CD4-positive, alpha-beta memory T cell (primary cell): ENCODE measurements at regions of chr10 and their contacts with region 1.

Region 1: DNA sequence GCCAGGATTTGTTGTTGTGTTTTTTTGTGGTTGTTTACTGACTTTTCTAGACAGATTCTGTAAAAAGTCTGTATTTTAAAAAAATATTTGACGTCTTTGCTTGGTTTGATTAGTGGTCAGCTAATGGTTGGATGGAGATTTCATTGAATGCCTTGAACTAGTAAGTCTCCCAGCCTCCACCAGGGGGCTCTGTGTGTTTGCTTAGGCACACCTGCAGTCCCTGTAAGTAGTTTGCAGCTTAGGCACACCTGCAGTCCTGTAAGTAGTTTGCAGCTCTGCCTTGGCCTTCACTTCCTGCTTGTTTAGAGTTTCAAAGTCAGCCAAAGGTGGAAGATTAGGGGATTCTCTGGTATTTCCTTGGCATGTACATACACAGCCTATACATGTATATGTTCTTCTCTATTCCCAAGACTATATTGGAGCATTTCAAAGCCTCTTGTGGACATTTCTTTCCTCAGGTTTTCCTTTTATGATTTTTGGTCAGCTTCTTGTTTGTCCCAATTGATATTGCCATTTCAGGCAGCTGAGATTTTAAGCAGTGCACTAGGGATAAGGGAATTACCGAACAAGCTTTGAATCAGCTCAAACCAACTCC is 101.6 kb downstream of the CCSER2 start:
- DNase-seq: peak; percentile 50 to 71 (median 54)
- H3K4me3 ChIP-seq: no peak overlapping the region
- H3K4me3 Mint-ChIP-seq: peak overlapping the region in 1 of 8 donors; percentile 4
- H3K27ac ChIP-seq: no peak overlapping the region
- H3K27ac Mint-ChIP-seq: peak overlapping the region in 2 of 7 donors; percentile 8 to 65
- H3K4me1 ChIP-seq: peaks cover 19% of the 10 kb centered on the region
- H3K4me1 Mint-ChIP-seq: peaks cover 45 to 57% (median 48%) of the 10 kb centered on the region in 4 donors
- H3K27me3 ChIP-seq: no peaks in the 10 kb centered on the region
- H3K27me3 Mint-ChIP-seq: no peaks in the 10 kb centered on the region

Region 2: DNA sequence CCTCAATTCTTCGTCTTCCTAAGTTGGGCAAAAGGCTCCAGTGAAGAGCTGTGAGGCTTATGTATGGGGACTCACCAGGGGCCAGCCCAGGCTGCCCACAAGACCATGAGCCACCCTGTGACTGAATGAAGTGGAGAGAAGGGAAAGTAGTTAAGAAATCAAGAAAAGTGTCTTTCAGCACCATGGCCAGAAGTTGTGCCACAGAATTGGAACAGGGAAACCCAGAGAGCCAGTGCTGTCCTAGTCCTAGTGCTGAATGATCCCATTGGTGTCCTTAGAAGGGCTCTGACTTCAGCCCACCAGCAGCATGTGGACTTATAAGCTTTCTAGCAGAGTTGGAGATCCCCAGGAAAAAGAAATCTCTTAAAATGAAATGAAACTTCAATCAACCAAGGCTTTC is 138.6 kb before region 1 on chr10:
- CTCF ChIA-PET with region 1: no interaction called
- POLR2A ChIA-PET with region 1: no interaction called
- intact Hi-C with region 1: no loop called
- DNase-seq: no peak
- H3K4me3 ChIP-seq: no peak overlapping the region
- H3K4me3 Mint-ChIP-seq: no peak overlapping the region
- H3K27ac ChIP-seq: no peak overlapping the region
- H3K27ac Mint-ChIP-seq: no peak overlapping the region
- H3K4me1 ChIP-seq: no peaks in the 10 kb centered on the region
- H3K4me1 Mint-ChIP-seq: peaks cover 3 to 7% (median 4%) of the 10 kb centered on the region in 4 donors
- H3K27me3 ChIP-seq: no peaks in the 10 kb centered on the region
- H3K27me3 Mint-ChIP-seq: peaks cover 0 to 2% of the 10 kb centered on the region in 2 donors

Region 3: GRCh38 chr10:84415539-84416244 is 14.3 kb before region 1 on chr10:
- CTCF ChIA-PET with region 1: interaction called, 31 read pairs
- POLR2A ChIA-PET with region 1: no interaction called
- intact Hi-C with region 1: no loop called
- DNase-seq: no peak
- H3K4me3 ChIP-seq: no peak overlapping the region
- H3K4me3 Mint-ChIP-seq: peak overlapping the region in 1 of 8 donors; percentile 11
- H3K27ac ChIP-seq: no peak overlapping the region
- H3K27ac Mint-ChIP-seq: peak overlapping the region in 2 of 7 donors; percentile 19 to 70
- H3K4me1 ChIP-seq: peaks cover 6% of the 10 kb centered on the region
- H3K4me1 Mint-ChIP-seq: peaks cover 37 to 43% (median 41%) of the 10 kb centered on the region in 4 donors
- H3K27me3 ChIP-seq: no peaks in the 10 kb centered on the region
- H3K27me3 Mint-ChIP-seq: no peaks in the 10 kb centered on the region

Region 4: DNA sequence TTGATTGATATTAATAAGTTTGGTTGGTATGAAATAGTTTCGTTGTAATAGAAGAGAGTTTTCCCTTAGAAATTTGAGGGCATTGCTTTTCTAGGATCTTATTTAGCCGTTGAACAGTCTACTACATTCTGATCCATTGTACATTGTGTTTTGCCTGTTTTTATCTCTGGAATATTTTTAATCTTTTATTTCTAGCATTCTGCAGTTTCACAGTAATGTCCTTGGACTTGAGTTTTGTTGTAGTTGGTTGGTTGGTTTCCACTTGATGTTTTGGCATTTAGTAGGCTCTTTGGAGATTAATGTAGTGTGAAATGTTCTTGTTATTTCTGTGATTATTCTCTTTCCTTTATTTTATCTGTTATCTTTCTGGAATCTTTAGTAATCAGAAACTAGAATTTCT is 10.8 kb after region 1 on chr10:
- CTCF ChIA-PET with region 1: interaction called, 18 read pairs
- POLR2A ChIA-PET with region 1: interaction called, 5 read pairs
- intact Hi-C with region 1: no loop called
- DNase-seq: no peak
- H3K4me3 ChIP-seq: no peak overlapping the region
- H3K4me3 Mint-ChIP-seq: no peak overlapping the region
- H3K27ac ChIP-seq: no peak overlapping the region
- H3K27ac Mint-ChIP-seq: no peak overlapping the region
- H3K4me1 ChIP-seq: no peaks in the 10 kb centered on the region
- H3K4me1 Mint-ChIP-seq: peaks cover 10 to 27% (median 13%) of the 10 kb centered on the region in 4 donors
- H3K27me3 ChIP-seq: no peaks in the 10 kb centered on the region
- H3K27me3 Mint-ChIP-seq: no peaks in the 10 kb centered on the region